ENCODE measurements at regions of chr4 and their contacts with region 1.

Region 1: DNA sequence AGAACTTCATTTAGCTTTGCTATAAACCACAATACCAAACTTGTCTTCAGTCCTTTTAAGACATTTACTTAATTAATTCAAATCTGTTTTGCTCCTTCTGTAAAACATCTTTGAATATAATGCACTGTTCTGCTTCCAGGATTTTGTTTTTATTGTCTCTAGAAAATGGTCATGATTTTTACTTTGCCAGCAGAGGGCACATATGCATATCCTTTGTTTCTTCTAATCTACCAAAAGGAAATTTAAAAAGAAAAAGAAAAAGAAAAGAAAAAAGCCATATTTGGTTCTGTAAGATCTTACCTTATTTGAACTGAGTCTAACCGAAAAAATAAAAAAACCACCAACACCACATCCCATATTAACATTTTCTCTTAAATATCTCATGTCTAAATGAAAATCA is 101.9 kb upstream of the CCSER1 start:
- DNase-seq: no peak
- ATAC-seq: no peak
- H3K4me3 Mint-ChIP-seq: peak overlapping the region; percentile 15
- H3K27ac Mint-ChIP-seq: no peak overlapping the region
- H3K4me1 Mint-ChIP-seq: peaks cover 37% of the 10 kb centered on the region
- H3K27me3 Mint-ChIP-seq: no peaks in the 10 kb centered on the region
- CTCF ChIP-seq: no peak

Region 2: DNA sequence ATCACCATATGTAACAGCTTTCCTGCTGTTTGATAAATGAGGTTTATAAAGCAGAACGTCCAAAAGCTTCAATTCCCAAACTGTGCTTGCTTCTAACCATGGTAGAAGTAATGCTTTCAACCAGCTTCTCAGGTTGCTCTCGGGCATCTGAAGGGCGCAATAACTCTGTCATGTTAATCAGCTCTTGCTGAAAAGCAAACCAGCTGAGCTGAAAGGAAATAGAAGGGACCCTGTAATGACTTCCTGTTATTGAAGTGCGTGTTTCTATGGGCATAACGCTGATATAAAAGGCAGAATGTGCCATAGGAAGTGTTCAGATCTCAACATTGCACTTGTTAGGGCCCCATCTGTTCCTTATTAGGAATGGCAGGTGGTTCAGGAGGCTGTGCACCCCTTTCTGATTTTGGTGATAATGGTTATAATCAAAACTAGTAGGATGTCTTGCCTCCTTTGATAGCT is 1411.8 kb before region 1 on chr4:
- CTCF ChIA-PET with region 1: no interaction called
- POLR2A ChIA-PET with region 1: no interaction called
- intact Hi-C with region 1: loop called (anchors 10 kb)
- DNase-seq: no peak
- ATAC-seq: peak; percentile 89
- H3K4me3 Mint-ChIP-seq: peak overlapping the region; percentile 59
- H3K27ac Mint-ChIP-seq: peak overlapping the region; percentile 70
- H3K4me1 Mint-ChIP-seq: peaks cover 76% of the 10 kb centered on the region
- H3K27me3 Mint-ChIP-seq: no peaks in the 10 kb centered on the region
- CTCF ChIP-seq: no peak

Region 3: GRCh38 chr4:89307446-89308160 is 717.6 kb before region 1 on chr4 and contains the start of gene GPRIN3:
- CTCF ChIA-PET with region 1: no interaction called
- POLR2A ChIA-PET with region 1: no interaction called
- intact Hi-C with region 1: loop called (anchors 10 kb)
- DNase-seq: peak; percentile 59
- ATAC-seq: peak; percentile 93
- H3K4me3 Mint-ChIP-seq: peak within 1 kb of the TSS; percentile 88
- H3K27ac Mint-ChIP-seq: peak within 1 kb of the TSS; percentile 46
- H3K4me1 Mint-ChIP-seq: peaks cover 30% of the 10 kb centered on the region
- H3K27me3 Mint-ChIP-seq: peaks cover 10% of the 10 kb centered on the region
- CTCF ChIP-seq: no peak
- total RNA-seq, gene GPRIN3: 1.8 and 1.9 TPM in 2 replicates

Region 4: DNA sequence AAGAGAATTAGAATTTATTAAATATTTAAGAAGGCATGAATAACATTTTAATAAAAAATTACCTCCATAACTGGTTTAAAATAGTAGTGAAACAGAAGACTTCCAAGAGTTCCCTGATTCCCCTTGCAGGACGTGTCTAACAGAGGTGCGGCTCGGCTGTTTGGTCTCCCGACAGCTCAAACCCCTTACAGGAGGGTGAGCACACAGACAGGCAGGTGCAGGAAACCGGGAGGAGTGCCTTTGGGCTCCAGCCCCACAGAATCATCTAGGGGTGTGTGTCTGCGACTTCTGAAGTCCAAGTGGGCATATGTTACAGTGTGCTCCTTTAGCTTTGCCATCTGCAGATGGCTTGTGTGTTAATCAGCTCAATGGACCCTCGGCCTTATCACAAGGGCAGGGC is 13.9 kb after region 1 on chr4:
- CTCF ChIA-PET with region 1: no interaction called
- POLR2A ChIA-PET with region 1: no interaction called
- intact Hi-C with region 1: loop called (anchors 2 kb)
- DNase-seq: no peak
- ATAC-seq: no peak
- H3K4me3 Mint-ChIP-seq: no peak overlapping the region
- H3K27ac Mint-ChIP-seq: no peak overlapping the region
- H3K4me1 Mint-ChIP-seq: no peaks in the 10 kb centered on the region
- H3K27me3 Mint-ChIP-seq: peaks cover 2% of the 10 kb centered on the region
- CTCF ChIP-seq: no peak

Region 5: DNA sequence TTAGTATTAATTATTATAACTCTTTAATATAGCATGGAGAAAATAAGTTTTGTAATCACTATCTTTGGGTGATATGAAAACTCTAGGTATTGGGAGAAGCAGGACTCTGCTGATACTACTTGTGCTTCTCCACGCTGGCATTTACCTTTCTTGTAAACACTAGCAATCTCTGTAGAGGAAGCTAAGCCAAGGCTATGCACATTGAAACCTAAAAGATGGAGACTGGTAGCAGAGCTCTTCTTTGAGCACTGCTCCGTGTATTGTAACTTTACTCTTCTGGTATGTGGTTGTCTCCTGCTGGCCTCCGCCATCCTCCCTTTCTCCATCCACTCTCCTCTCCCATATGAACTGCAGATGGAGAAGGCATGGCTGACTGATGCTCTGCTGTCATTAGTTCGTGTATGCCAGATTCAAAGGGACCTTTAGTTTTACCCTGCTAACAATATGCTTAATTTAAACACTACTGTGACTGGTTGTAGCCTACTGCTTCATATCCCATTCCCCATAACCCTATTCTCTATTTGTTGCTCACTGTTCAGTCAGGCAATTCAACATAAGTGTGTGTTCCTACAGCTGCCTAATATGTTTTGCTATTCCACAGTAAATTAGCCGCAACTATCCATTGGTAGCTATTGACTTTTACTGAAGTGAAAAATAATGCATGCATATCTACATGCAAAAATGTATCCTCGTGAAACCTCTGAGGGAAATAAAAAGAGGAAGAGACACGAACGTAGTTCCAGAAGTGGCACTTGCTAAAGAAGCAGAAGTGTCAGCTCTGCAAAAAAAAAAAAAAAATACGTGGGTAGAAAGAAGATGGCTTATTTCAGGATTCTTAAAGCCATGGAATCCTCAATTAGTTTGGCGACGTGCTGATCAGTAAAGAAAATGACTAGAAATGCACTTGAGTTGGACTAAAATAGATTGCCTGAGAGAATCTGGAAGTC is 46.3 kb after region 1 on chr4:
- CTCF ChIA-PET with region 1: no interaction called
- POLR2A ChIA-PET with region 1: interaction called, 7 read pairs
- intact Hi-C with region 1: loop called (anchors 1 kb)
- DNase-seq: no peak
- ATAC-seq: peak; percentile 88
- H3K4me3 Mint-ChIP-seq: peak overlapping the region; percentile 52
- H3K27ac Mint-ChIP-seq: peak overlapping the region; percentile 51
- H3K4me1 Mint-ChIP-seq: peaks cover 36% of the 10 kb centered on the region
- H3K27me3 Mint-ChIP-seq: peaks cover 5% of the 10 kb centered on the region
- CTCF ChIP-seq: no peak

Region 6: DNA sequence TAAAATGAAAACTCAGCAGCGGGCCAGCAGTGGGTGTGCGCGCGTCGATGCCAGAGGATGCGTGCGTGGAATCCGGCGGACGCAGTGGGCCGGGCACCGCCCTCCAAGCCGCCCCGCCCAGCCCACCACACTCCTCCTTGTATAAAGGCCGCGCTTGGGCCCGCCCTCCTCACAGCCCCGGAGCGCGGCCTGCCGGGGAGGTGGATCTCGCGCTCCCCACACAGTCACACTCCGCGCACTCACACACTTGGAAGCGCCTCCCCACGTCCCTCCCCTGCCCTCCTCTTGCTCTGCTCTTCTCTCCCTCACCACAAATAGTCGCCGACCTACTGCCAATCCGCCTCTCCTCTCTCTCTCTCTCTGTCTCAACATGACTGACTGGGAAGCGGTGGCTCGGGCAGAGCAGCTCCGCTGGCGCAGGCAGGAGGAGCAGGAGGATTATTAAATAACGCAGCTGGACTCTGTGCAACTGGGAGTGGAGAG is 102.0 kb after region 1 on chr4 and contains the start of gene CCSER1:
- CTCF ChIA-PET with region 1: no interaction called
- POLR2A ChIA-PET with region 1: interaction called, 6 read pairs
- intact Hi-C with region 1: loop called (anchors 1 kb)
- DNase-seq: peak; percentile 78
- ATAC-seq: peak; percentile 89
- H3K4me3 Mint-ChIP-seq: peak within 1 kb of the TSS; percentile 96
- H3K27ac Mint-ChIP-seq: peak within 1 kb of the TSS; percentile 95
- H3K4me1 Mint-ChIP-seq: peaks cover 21% of the 10 kb centered on the region
- H3K27me3 Mint-ChIP-seq: peaks cover 2% of the 10 kb centered on the region
- CTCF ChIP-seq: no peak
- total RNA-seq, gene CCSER1: 14.4 and 20.1 TPM in 2 replicates